CD8-positive, alpha-beta T cell (primary cell): ENCODE measurements at regions of chr19 and their contacts with region 1.

Region 1: GRCh38 chr19:7197760-7198696 is 96.2 kb downstream of the INSR start:
- DNase-seq: peak; percentile 80 to 98 (median 89)
- ATAC-seq: peak; percentile 83
- H3K4me3 ChIP-seq: peak overlapping the region; percentile 67 to 76
- H3K4me3 Mint-ChIP-seq: peak overlapping the region; percentile 90
- H3K27ac ChIP-seq: peak overlapping the region; percentile 73
- H3K27ac Mint-ChIP-seq: peak overlapping the region; percentile 95
- H3K4me1 ChIP-seq: peaks cover 17% of the 10 kb centered on the region
- H3K4me1 Mint-ChIP-seq: peaks cover 14% of the 10 kb centered on the region
- H3K27me3 ChIP-seq: no peaks in the 10 kb centered on the region
- H3K27me3 Mint-ChIP-seq: peaks cover 2% of the 10 kb centered on the region
- CTCF ChIP-seq: no peak

Region 2: GRCh38 chr19:7069042-7069903 is 128.8 kb before region 1 on chr19 and contains the start of gene ZNF557:
- CTCF ChIA-PET with region 1: no interaction called
- POLR2A ChIA-PET with region 1: no interaction called
- intact Hi-C with region 1: loop called in 1 of 2 experiments (anchors 1 kb)
- DNase-seq: peak; percentile 98 to 99 (median 99)
- ATAC-seq: peak; percentile 97
- H3K4me3 ChIP-seq: peak within 1 kb of the TSS; percentile 76 to 99
- H3K4me3 Mint-ChIP-seq: peak within 1 kb of the TSS; percentile 94
- H3K27ac ChIP-seq: peak within 1 kb of the TSS; percentile 81 to 95
- H3K27ac Mint-ChIP-seq: peak within 1 kb of the TSS; percentile 96
- H3K4me1 ChIP-seq: peaks cover 21% of the 10 kb centered on the region
- H3K4me1 Mint-ChIP-seq: peaks cover 25% of the 10 kb centered on the region
- H3K27me3 ChIP-seq: no peaks in the 10 kb centered on the region
- H3K27me3 Mint-ChIP-seq: no peaks in the 10 kb centered on the region
- CTCF ChIP-seq: no peak
- total RNA-seq, gene ZNF557: 19.7 to 20.0 TPM

Region 3: GRCh38 chr19:7152568-7152967 is 45.5 kb before region 1 on chr19:
- CTCF ChIA-PET with region 1: interaction called, 3 read pairs
- POLR2A ChIA-PET with region 1: interaction called, 3 read pairs
- intact Hi-C with region 1: loop called in 1 of 2 experiments (anchors 5 kb)
- DNase-seq: no peak
- ATAC-seq: no peak
- H3K4me3 ChIP-seq: no peak overlapping the region
- H3K4me3 Mint-ChIP-seq: no peak overlapping the region
- H3K27ac ChIP-seq: no peak overlapping the region
- H3K27ac Mint-ChIP-seq: no peak overlapping the region
- H3K4me1 ChIP-seq: no peaks in the 10 kb centered on the region
- H3K4me1 Mint-ChIP-seq: peaks cover 3% of the 10 kb centered on the region
- H3K27me3 ChIP-seq: peaks cover 0 to 3% of the 10 kb centered on the region in 2 experiments
- H3K27me3 Mint-ChIP-seq: no peaks in the 10 kb centered on the region
- CTCF ChIP-seq: no peak

Region 4: DNA sequence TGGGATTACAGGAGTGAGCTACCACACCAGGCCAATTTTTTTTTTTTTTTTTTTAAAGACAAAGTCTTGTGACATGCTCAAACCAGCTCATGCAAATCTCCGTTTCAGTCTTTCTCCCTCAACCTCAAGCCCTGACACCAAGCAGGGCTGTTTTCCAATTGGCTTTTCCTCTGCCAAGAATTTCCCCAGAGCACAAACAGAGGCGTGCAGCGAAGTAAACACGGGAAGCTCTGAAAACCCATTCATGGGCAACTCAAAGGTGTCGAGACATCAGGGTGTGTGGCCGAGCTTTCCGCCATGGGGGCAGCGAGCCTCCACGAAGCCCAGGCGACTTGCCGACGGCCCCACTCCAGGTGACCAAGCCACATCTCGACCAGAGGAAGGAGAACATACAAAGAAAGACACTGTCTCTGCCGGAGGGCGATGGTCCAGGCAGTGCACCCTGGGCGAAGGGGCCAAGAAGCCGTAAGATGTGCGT is 26.2 kb after region 1 on chr19:
- CTCF ChIA-PET with region 1: no interaction called
- POLR2A ChIA-PET with region 1: no interaction called
- intact Hi-C with region 1: no loop called
- DNase-seq: no peak
- ATAC-seq: no peak
- H3K4me3 ChIP-seq: no peak overlapping the region
- H3K4me3 Mint-ChIP-seq: no peak overlapping the region
- H3K27ac ChIP-seq: no peak overlapping the region
- H3K27ac Mint-ChIP-seq: no peak overlapping the region
- H3K4me1 ChIP-seq: no peaks in the 10 kb centered on the region
- H3K4me1 Mint-ChIP-seq: peaks cover 8% of the 10 kb centered on the region
- H3K27me3 ChIP-seq: peaks cover 0 to 2% of the 10 kb centered on the region in 2 experiments
- H3K27me3 Mint-ChIP-seq: peaks cover 8% of the 10 kb centered on the region
- CTCF ChIP-seq: no peak

Region 5: DNA sequence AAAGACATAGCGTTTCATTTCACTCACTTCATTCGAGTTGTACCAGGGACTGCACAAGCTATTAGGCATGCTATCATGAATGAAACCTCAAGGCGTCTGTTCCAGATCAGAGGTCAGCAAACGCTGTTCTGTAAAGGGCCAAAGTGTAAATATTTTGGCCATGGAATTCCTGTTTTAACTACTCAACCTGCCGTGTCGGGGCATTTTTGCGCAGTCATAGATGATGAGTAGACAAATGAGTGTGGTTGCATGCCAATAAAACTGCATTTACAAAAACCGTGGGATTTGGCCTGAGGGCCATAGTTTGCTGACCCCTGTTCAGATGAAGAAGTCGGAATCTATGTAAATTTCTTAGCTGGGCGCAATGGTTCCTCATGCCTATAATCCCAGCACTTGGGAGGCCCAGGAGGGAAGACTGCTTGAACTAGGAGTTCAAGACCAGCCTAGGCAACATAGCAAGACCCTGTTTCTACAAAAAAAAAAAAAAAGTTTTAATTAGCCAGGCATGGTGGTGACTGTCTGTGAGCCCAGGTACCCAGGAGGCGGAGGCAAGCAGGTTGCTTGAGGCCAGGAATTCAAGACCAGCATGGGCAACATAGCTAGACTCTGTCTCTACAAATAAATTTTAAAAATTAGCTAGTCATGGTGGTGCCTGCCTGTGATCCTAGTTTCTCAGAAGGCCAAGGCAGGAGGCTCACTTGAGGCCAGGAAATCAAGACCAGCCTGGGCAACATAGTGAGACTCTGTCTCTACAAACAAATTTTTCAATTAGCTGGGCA is 89.9 kb after region 1 on chr19:
- CTCF ChIA-PET with region 1: no interaction called
- POLR2A ChIA-PET with region 1: no interaction called
- intact Hi-C with region 1: no loop called
- DNase-seq: no peak
- ATAC-seq: no peak
- H3K4me3 ChIP-seq: no peak overlapping the region
- H3K4me3 Mint-ChIP-seq: no peak overlapping the region
- H3K27ac ChIP-seq: no peak overlapping the region
- H3K27ac Mint-ChIP-seq: no peak overlapping the region
- H3K4me1 ChIP-seq: no peaks in the 10 kb centered on the region
- H3K4me1 Mint-ChIP-seq: peaks cover 3% of the 10 kb centered on the region
- H3K27me3 ChIP-seq: no peaks in the 10 kb centered on the region
- H3K27me3 Mint-ChIP-seq: peaks cover 8% of the 10 kb centered on the region
- CTCF ChIP-seq: no peak

Region 6: GRCh38 chr19:7629347-7630054 is 431.5 kb after region 1 on chr19 and contains the starts of genes PET100 and XAB2:
- CTCF ChIA-PET with region 1: no interaction called
- POLR2A ChIA-PET with region 1: no interaction called
- intact Hi-C with region 1: loop called in 1 of 2 experiments (anchors 10 kb)
- DNase-seq: peak; percentile 90 to 99 (median 94)
- ATAC-seq: peak; percentile 94
- H3K4me3 ChIP-seq: peak within 1 kb of the TSS; percentile 98 to 100
- H3K4me3 Mint-ChIP-seq: peak within 1 kb of the TSS; percentile 97
- H3K27ac ChIP-seq: peak within 1 kb of the TSS; percentile 92 to 99
- H3K27ac Mint-ChIP-seq: peak within 1 kb of the TSS; percentile 99
- H3K4me1 ChIP-seq: peaks cover 27% of the 10 kb centered on the region
- H3K4me1 Mint-ChIP-seq: peaks cover 36% of the 10 kb centered on the region
- H3K27me3 ChIP-seq: no peaks in the 10 kb centered on the region
- H3K27me3 Mint-ChIP-seq: no peaks in the 10 kb centered on the region
- CTCF ChIP-seq: no peak
- total RNA-seq, gene PET100: 186 to 188 TPM
- total RNA-seq, gene XAB2: 127 to 133 TPM